A673 (cell line): ENCODE measurements at regions of chrX and their contacts with region 1.

Region 1: GRCh38 chrX:93874554-93874953 is 200.5 kb downstream of the FAM133A start:
- DNase-seq: peak; percentile 51
- H3K4me3 ChIP-seq: no peak overlapping the region
- H3K27ac ChIP-seq: no peak overlapping the region
- H3K4me1 ChIP-seq: no peaks in the 10 kb centered on the region
- H3K27me3 ChIP-seq: no peaks in the 10 kb centered on the region
- CTCF ChIP-seq: peak; percentile 70

Region 2: GRCh38 chrX:94058728-94059382 is 184.3 kb after region 1 on chrX:
- CTCF ChIA-PET with region 1: no interaction called
- POLR2A ChIA-PET with region 1: no interaction called
- intact Hi-C with region 1: loop called (anchors 2 kb)
- DNase-seq: peak; percentile 22
- H3K4me3 ChIP-seq: no peak overlapping the region
- H3K27ac ChIP-seq: no peak overlapping the region
- H3K4me1 ChIP-seq: no peaks in the 10 kb centered on the region
- H3K27me3 ChIP-seq: no peaks in the 10 kb centered on the region
- CTCF ChIP-seq: peak; percentile 62

Region 3: DNA sequence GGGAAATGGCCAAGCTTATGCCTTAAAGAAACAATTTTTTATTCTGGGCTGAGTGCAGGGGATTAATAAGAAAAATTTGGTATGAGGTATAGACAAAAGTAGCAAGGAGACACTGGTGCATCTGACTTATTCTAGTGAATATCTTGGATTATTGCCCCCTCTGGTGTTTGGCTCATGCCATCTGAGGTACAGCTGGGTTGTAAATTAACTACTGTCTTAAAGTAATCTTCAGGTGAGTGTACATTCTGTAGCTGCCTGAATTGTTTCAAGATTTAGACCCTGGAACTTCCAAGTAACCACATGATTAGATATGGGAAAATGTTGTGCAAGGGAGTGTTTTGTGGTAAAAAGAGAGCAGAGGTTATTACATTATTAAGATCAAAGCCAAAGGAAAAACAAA is 788.1 kb after region 1 on chrX:
- CTCF ChIA-PET with region 1: no interaction called
- POLR2A ChIA-PET with region 1: no interaction called
- intact Hi-C with region 1: no loop called
- DNase-seq: no peak
- H3K4me3 ChIP-seq: no peak overlapping the region
- H3K27ac ChIP-seq: no peak overlapping the region
- H3K4me1 ChIP-seq: no peaks in the 10 kb centered on the region
- H3K27me3 ChIP-seq: no peaks in the 10 kb centered on the region
- CTCF ChIP-seq: no peak